ENCODE measurements at regions of chr10 and their contacts with region 1.

Region 1: DNA sequence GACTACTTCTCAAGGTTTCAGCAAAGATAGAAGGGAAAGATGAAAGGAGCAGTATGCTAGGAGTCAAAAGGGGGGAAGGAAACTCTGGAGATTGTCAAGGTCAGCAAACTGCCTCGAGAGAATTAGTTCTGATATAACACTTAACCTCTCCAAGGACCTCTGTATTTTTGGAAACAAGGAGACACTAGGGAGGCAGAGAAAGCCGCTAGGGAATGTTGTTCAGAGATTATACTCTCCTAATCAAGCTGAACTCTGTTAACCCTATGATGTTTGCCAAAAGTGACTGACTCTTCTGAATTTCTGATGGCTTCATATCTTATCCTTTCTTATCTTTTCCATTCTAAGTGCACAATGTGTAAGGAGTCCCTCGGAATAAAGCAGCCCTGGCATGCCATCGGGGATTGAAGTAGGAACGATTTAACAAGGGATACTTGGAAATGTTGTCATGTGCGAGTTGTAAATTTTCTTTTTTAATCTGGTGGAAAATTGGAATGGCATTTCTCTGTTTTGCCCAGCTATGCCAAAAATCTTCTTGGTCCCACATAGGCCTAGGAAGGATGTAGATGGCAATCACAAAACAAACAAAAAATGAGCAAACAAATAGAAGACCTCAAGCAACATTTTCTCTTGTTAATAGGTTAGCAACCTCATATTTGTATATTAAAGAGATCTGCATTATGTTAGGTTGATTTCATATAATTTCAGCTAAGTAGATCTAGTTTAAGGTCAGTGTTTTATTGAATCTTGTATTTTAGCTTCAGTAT is 27.3 kb downstream of the CREM start:
- DNase-seq: no peak
- H3K4me3 ChIP-seq: no peak overlapping the region
- H3K4me3 Mint-ChIP-seq: no peak overlapping the region
- H3K27ac ChIP-seq: no peak overlapping the region
- H3K27ac Mint-ChIP-seq: peak overlapping the region in 2 of 7 donors; percentile 42 to 72
- H3K4me1 ChIP-seq: peaks cover 21% of the 10 kb centered on the region
- H3K4me1 Mint-ChIP-seq: peaks cover 16 to 35% (median 22%) of the 10 kb centered on the region in 4 donors
- H3K27me3 ChIP-seq: no peaks in the 10 kb centered on the region
- H3K27me3 Mint-ChIP-seq: no peaks in the 10 kb centered on the region

Region 2: GRCh38 chr10:35136263-35136815 is 17.6 kb before region 1 on chr10:
- CTCF ChIA-PET with region 1: interaction called, 3 read pairs
- POLR2A ChIA-PET with region 1: interaction called, 17 read pairs
- intact Hi-C with region 1: loop called (anchors 1 kb)
- DNase-seq: no peak
- H3K4me3 ChIP-seq: no peak overlapping the region
- H3K4me3 Mint-ChIP-seq: peak overlapping the region in 7 of 8 donors; percentile 44 to 84 (median 65)
- H3K27ac ChIP-seq: peak overlapping the region; percentile 47
- H3K27ac Mint-ChIP-seq: peak overlapping the region; percentile 30 to 94 (median 89)
- H3K4me1 ChIP-seq: peaks cover 47% of the 10 kb centered on the region
- H3K4me1 Mint-ChIP-seq: peaks cover 22 to 45% (median 33%) of the 10 kb centered on the region in 4 donors
- H3K27me3 ChIP-seq: no peaks in the 10 kb centered on the region
- H3K27me3 Mint-ChIP-seq: no peaks in the 10 kb centered on the region

Region 3: DNA sequence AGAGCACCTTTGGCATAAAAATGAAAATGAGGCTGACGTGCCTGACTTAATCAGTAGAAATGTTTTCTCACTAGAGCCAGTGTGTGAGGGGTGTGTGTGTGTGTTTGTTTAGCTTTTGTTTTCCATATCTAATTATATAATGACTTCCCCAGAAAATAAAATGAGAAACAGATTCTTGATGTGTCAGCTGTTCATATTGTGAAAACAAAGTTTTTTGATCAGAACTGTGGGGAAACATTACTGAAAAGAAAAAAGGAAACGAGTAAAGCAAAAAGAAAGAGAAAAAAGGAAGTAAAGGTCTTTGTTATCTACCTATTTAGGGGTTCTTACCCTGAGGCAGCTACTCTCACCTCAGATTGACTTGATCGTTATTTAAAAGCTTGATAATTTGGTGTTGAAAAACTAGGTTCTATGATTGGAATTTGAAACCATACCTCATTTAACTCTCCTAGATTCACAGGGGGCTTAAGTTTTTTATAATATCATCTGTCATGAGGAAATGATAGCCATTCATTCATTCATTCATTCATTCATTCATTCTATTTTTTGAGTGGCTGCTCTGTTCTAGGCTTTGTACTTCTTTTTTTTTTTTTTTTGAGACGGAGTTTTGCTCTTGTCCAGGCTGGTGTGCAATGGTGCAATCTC is 30.8 kb after region 1 on chr10:
- CTCF ChIA-PET with region 1: no interaction called
- POLR2A ChIA-PET with region 1: no interaction called
- intact Hi-C with region 1: loop called (anchors 5 kb)
- DNase-seq: no peak
- H3K4me3 ChIP-seq: no peak overlapping the region
- H3K4me3 Mint-ChIP-seq: no peak overlapping the region
- H3K27ac ChIP-seq: no peak overlapping the region
- H3K27ac Mint-ChIP-seq: peak overlapping the region in 4 of 7 donors; percentile 19 to 75 (median 72)
- H3K4me1 ChIP-seq: no peaks in the 10 kb centered on the region
- H3K4me1 Mint-ChIP-seq: no peaks in the 10 kb centered on the region
- H3K27me3 ChIP-seq: no peaks in the 10 kb centered on the region
- H3K27me3 Mint-ChIP-seq: no peaks in the 10 kb centered on the region